Activated naive CD4-positive, alpha-beta T cell treated with anti-CD3 and anti-CD28 coated beads for 36 hours (primary cell): ENCODE measurements at regions of chr4 and their contacts with region 1.

Region 1: GRCh38 chr4:139858436-139859225 is 193.0 kb downstream of the MGST2 start:
- DNase-seq: peak; percentile 55
- H3K4me3 Mint-ChIP-seq: no peak overlapping the region
- H3K27ac Mint-ChIP-seq: peak overlapping the region; percentile 22
- H3K4me1 Mint-ChIP-seq: peaks cover 19% of the 10 kb centered on the region
- H3K27me3 Mint-ChIP-seq: peaks cover 19% of the 10 kb centered on the region

Region 2: DNA sequence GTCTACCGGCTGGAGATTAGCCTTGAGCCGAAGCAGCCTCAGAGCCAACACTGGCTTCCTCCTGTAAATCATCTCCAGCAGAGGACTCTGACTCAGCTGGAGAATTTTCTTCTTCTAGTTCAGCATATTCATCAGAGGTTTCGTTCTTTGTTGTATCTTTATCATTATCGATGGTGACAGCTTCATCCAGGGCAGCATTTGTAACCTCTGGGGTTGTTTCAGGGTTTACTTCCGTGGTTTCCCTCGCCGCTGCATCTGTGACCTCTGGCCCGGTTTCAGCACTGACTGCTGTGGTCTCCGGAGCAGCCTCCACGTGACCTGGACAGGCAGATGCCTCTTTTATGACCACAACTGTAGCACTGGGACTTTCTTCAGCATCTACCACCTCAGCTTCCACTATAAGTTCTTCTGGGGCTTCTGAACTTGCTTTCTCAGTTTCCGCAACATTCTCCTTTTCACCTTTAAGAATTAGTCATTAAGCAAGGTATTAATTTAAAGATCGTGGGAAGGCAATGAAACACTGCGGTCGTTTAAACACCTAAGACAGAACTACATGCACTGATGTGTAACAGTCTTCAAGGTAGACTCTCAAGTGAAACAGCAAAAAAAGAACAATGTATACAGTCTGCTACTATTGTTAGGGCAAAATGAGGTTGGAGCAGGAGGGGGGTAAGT is 591.9 kb before region 1 on chr4:
- CTCF ChIA-PET with region 1: no interaction called
- intact Hi-C with region 1: loop called (anchors 1 kb)
- DNase-seq: peak; percentile 91
- H3K4me3 Mint-ChIP-seq: peak overlapping the region; percentile 52
- H3K27ac Mint-ChIP-seq: peak overlapping the region; percentile 60
- H3K4me1 Mint-ChIP-seq: peaks cover 18% of the 10 kb centered on the region
- H3K27me3 Mint-ChIP-seq: no peaks in the 10 kb centered on the region

Region 3: GRCh38 chr4:139711461-139711860 is 147.2 kb before region 1 on chr4:
- CTCF ChIA-PET with region 1: no interaction called
- intact Hi-C with region 1: no loop called
- DNase-seq: no peak
- H3K4me3 Mint-ChIP-seq: no peak overlapping the region
- H3K27ac Mint-ChIP-seq: no peak overlapping the region
- H3K4me1 Mint-ChIP-seq: no peaks in the 10 kb centered on the region
- H3K27me3 Mint-ChIP-seq: no peaks in the 10 kb centered on the region

Region 4: DNA sequence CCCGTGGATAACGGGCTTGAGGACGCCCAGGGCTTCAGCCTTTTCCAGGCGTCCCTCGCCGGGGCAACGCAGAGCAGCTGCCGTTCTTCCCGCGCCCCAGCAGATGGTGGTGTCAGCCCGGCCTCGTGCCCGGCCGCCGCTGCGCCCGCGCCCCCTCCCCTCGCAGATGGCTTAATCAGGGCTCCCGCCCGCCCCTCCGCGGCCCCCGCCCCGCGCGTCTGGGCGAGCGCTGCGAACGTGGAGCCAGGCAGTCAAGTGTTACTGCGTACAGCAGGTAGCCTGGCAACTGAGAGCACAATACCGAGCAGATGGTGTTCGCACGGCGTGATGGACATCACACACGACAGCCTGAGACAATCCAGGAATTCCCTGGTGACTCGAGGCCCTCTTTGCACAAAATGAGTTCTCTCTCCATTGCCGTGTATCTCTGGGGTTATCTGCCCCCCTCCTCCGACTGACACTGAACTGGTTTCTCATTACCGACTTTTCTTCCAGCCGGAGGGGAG is 123.7 kb before region 1 on chr4:
- CTCF ChIA-PET with region 1: no interaction called
- intact Hi-C with region 1: loop called (anchors 2 kb)
- DNase-seq: peak; percentile 78
- H3K4me3 Mint-ChIP-seq: peak overlapping the region; percentile 61
- H3K27ac Mint-ChIP-seq: no peak overlapping the region
- H3K4me1 Mint-ChIP-seq: peaks cover 22% of the 10 kb centered on the region
- H3K27me3 Mint-ChIP-seq: peaks cover 29% of the 10 kb centered on the region

Region 5: DNA sequence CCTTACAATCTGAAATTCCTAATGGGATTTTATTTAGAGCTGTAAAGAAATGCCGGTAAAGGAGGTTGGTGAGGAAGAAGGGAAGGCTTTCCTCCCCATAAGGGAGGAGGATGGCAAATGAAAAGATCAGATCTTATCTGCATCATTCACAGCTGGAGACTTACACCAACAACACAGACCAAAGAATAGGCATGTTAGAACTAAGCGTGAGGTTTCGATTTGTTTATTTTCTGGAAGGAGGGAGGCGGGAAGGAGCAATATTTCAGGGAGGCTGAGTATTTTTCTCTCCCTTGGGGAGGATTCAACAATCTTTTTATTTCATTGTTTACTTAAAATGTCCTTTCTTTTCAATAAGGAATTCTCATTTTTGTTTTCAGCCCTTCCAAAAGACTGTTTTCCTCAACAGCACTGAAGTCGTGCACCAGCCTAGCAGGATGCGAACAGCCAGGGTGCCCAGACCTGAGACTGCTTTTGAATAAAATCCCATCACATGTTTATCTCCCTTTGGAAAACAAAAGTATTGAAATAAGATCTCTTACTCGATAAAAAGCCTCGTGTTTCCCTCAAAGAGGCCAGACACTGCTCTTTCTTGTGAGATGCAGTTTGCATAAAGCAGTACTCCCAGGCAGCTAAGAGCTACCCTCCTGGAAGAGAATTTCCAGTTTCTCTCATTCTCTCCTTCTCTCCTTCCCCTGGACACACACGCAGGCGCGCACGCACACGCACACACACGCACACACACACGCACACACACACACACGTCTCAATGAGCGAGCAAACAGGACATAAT is 43.1 kb after region 1 on chr4:
- CTCF ChIA-PET with region 1: no interaction called
- intact Hi-C with region 1: loop called (anchors 1 kb)
- DNase-seq: no peak
- H3K4me3 Mint-ChIP-seq: no peak overlapping the region
- H3K27ac Mint-ChIP-seq: no peak overlapping the region
- H3K4me1 Mint-ChIP-seq: peaks cover 14% of the 10 kb centered on the region
- H3K27me3 Mint-ChIP-seq: peaks cover 2% of the 10 kb centered on the region

Region 6: DNA sequence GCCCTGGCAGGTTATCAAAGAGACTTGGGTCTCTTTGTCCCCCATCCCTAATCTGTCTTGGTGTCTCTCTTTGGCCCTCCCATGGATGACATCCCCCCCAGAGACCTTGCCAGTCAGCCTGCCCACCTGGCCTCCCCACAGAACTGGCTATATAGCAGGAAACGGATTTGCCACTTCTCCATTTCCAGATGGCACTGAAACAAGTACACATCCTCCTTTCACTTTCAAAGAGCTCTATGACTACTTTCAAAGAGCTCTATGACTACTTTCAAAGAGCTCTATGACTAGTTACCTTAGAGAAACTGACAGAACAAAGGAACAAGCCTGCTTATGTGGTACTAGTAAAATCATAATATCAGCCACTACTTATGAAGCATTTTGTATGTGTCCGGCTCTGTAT is 120.1 kb after region 1 on chr4:
- CTCF ChIA-PET with region 1: no interaction called
- intact Hi-C with region 1: loop called (anchors 1 kb)
- DNase-seq: peak; percentile 45
- H3K4me3 Mint-ChIP-seq: no peak overlapping the region
- H3K27ac Mint-ChIP-seq: no peak overlapping the region
- H3K4me1 Mint-ChIP-seq: peaks cover 22% of the 10 kb centered on the region
- H3K27me3 Mint-ChIP-seq: no peaks in the 10 kb centered on the region

Region 7: GRCh38 chr4:140095694-140096482 is 237.3 kb after region 1 on chr4:
- CTCF ChIA-PET with region 1: no interaction called
- intact Hi-C with region 1: loop called (anchors 1 kb)
- DNase-seq: peak; percentile 91
- H3K4me3 Mint-ChIP-seq: peak overlapping the region; percentile 90
- H3K27ac Mint-ChIP-seq: peak overlapping the region; percentile 99
- H3K4me1 Mint-ChIP-seq: peaks cover 77% of the 10 kb centered on the region
- H3K27me3 Mint-ChIP-seq: no peaks in the 10 kb centered on the region

Region 8: DNA sequence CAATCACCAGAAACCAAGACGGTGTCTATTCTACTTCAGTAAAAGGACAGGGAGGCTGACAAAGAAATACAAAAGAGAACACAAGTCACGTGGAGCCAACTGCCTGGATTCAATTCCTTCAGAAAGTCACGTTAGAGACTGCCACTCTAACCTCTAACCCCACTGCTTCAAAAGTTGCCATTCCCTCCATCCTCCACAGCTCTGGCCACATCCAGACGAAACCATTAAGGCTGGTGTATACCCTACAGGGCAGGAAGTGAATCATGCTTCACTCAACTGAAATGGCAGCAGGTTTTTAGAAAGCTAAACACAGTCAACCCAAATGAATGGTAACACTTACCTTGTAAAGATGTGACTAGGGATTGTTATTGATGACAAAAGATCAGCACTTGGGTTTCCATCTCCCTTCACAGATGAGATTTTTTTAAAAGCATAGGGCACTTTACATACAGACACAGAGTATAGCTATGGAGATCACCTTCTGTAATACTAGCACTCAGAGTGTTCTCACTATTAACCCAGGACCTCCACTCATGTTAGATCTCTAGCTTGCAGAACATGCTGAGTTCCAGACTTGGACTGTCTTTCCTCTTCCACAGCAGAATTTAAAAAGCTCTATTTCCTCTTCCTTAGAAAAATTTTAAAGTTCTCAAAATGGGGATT is 257.9 kb after region 1 on chr4:
- CTCF ChIA-PET with region 1: no interaction called
- intact Hi-C with region 1: loop called (anchors 5 kb)
- DNase-seq: peak; percentile 66
- H3K4me3 Mint-ChIP-seq: no peak overlapping the region
- H3K27ac Mint-ChIP-seq: peak overlapping the region; percentile 70
- H3K4me1 Mint-ChIP-seq: peaks cover 24% of the 10 kb centered on the region
- H3K27me3 Mint-ChIP-seq: no peaks in the 10 kb centered on the region